Naive thymus-derived CD4-positive, alpha-beta T cell (primary cell): ENCODE measurements at regions of chr11 and their contacts with region 1.

Region 1: DNA sequence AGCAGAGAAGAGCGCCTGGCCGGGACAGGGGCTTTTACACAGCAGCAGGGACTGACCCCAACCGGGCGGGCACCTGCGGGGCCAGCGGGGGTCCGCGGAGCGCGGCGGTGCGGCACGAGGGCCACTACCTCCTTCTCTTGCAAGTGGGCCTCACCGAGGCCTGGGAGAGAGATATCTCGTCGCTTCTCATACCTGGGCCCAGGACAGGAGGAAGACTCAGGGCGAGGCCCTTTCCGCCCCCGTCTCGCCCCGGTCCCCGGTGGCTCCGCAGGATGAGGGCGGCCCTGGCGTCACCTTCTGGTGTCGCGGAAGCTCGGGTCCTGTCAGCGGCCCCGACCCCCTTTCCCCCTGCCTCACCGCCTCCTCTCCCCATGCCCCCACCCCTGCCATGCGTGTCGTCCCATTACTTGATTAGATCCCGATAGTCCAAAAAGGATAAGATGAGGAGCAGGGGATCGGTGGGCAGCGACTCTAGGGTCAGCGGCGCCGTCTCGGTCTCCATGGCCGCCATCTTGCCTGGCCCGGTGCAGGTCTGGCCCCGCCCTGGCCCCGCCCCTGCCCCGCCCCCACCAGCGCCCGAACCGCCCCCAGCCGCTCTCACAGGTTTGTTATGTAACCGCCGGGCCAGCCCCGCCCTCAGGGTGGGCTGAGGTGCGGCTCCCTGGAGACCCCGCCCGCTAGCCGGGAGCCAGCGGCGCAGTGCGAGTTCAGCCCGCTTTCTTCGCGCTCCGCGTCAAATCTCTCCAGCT is at the start of gene FBXO3:
- DNase-seq: peak; percentile 71 to 91 (median 88)
- ATAC-seq: peak; percentile 98
- H3K4me3 ChIP-seq: peak within 1 kb of the TSS; percentile 91
- H3K4me3 Mint-ChIP-seq: peak within 1 kb of the TSS; percentile 93 to 99 (median 97)
- H3K27ac ChIP-seq: peak within 1 kb of the TSS; percentile 83
- H3K27ac Mint-ChIP-seq: peak within 1 kb of the TSS; percentile 93 to 98 (median 96)
- H3K4me1 ChIP-seq: peaks cover 20 to 23% of the 10 kb centered on the region in 2 donors
- H3K4me1 Mint-ChIP-seq: peaks cover 33 to 58% (median 45%) of the 10 kb centered on the region in 7 donors
- H3K27me3 ChIP-seq: no peaks in the 10 kb centered on the region
- H3K27me3 Mint-ChIP-seq: peaks cover 0 to 34% (median 7%) of the 10 kb centered on the region in 5 donors
- total RNA-seq, gene FBXO3: 22.6 to 55.7 (median 47.7) TPM

Region 2: GRCh38 chr11:33039274-33040032 is 734.7 kb before region 1 on chr11 and contains the start of gene TCP11L1:
- CTCF ChIA-PET with region 1: no interaction called
- POLR2A ChIA-PET with region 1: no interaction called
- intact Hi-C with region 1: loop called in 1 of 2 experiments (anchors 1 kb)
- DNase-seq: peak; percentile 57 to 88 (median 76)
- ATAC-seq: peak; percentile 93
- H3K4me3 ChIP-seq: peak within 1 kb of the TSS; percentile 100
- H3K4me3 Mint-ChIP-seq: peak within 1 kb of the TSS; percentile 91 to 97 (median 94)
- H3K27ac ChIP-seq: peak within 1 kb of the TSS; percentile 82
- H3K27ac Mint-ChIP-seq: peak within 1 kb of the TSS; percentile 77 to 95 (median 92)
- H3K4me1 ChIP-seq: peaks cover 3 to 9% of the 10 kb centered on the region in 2 donors
- H3K4me1 Mint-ChIP-seq: peaks cover 0 to 17% (median 14%) of the 10 kb centered on the region in 7 donors
- H3K27me3 ChIP-seq: no peaks in the 10 kb centered on the region
- H3K27me3 Mint-ChIP-seq: peaks cover 0 to 17% (median 0%) of the 10 kb centered on the region in 5 donors
- total RNA-seq, gene TCP11L1: 9.1 to 17.1 (median 13.3) TPM

Region 3: DNA sequence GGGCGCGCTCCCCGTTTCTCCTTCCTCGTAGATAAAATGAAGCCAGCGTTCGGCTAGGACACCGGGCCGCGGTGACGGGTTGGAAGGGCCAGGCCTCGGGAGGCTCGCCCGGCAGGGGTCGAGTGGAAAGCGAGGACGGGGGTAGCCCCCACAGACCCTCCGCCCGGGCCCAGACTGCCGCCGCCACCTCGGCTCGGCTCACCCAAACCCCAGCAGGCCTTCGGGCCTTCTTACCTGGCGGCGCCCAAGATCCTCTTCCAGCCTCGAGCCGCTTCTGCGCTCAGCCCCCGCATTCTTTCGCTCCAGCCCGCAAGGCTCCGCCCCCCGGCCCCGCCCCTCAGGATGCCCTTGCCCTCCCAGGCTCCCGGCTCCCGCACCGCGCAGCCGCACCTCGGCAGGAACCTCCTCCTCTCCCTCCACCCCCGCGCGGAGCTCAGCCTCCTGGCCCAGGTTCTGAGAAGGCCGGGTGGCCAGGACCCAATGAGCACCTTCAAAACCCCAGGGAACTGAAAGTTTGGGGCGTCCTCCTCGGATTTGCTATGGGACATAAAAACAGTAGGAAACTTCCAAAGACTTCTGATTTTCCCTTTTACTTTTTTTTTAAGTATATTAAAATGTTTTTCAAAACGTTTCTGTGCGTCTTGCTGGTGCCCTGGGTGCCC is 37.9 kb before region 1 on chr11 and contains the start of gene CD59:
- CTCF ChIA-PET with region 1: no interaction called
- POLR2A ChIA-PET with region 1: interaction called, 22 read pairs
- intact Hi-C with region 1: loop called (anchors 1 kb)
- DNase-seq: peak; percentile 75 to 94 (median 85)
- ATAC-seq: peak; percentile 92
- H3K4me3 ChIP-seq: peak within 1 kb of the TSS; percentile 76
- H3K4me3 Mint-ChIP-seq: peak within 1 kb of the TSS; percentile 87 to 97 (median 92)
- H3K27ac ChIP-seq: peak within 1 kb of the TSS; percentile 72
- H3K27ac Mint-ChIP-seq: peak within 1 kb of the TSS; percentile 79 to 94 (median 86)
- H3K4me1 ChIP-seq: peaks cover 9 to 17% of the 10 kb centered on the region in 2 donors
- H3K4me1 Mint-ChIP-seq: peaks cover 21 to 41% (median 36%) of the 10 kb centered on the region in 7 donors
- H3K27me3 ChIP-seq: no peaks in the 10 kb centered on the region
- H3K27me3 Mint-ChIP-seq: peaks cover 0 to 11% (median 0%) of the 10 kb centered on the region in 5 donors
- total RNA-seq, gene CD59: 23.3 to 152 (median 62.7) TPM

Region 4: DNA sequence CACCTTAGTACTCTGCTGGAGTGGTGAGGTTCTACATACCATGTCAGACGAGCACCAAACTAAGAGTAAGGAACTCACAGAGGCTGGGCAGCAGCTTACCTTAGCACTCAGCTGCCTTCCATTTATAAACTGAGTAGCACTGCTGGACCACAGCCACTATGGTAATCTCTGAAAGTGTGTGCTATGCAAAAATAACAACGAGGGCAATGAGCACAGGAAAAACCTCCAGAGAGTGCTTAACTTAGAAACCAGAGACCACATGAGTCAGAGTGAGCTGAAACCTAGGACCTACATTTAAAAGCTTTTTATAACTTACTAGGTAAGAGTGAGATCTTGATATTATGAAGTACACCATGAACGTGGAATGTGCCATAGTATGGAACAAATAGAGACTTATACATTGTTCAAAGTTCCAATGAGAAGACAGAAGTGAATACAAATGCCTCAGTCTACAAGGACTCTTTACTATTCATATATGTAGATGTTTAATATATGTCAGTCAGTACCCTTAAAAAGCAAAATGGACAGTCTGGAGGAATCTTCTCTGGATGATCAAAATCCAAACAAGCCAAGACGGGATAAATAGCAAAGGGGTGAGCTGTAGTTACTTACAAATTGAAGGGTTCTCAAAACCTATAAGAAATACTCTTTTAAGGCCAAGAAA is 20.7 kb before region 1 on chr11:
- CTCF ChIA-PET with region 1: no interaction called
- POLR2A ChIA-PET with region 1: interaction called, 10 read pairs
- intact Hi-C with region 1: loop called in 1 of 2 experiments (anchors 2 kb)
- DNase-seq: no peak
- ATAC-seq: no peak
- H3K4me3 ChIP-seq: no peak overlapping the region
- H3K4me3 Mint-ChIP-seq: no peak overlapping the region
- H3K27ac ChIP-seq: no peak overlapping the region
- H3K27ac Mint-ChIP-seq: peak overlapping the region in 2 of 9 donors; percentile 54 to 78
- H3K4me1 ChIP-seq: no peaks in the 10 kb centered on the region
- H3K4me1 Mint-ChIP-seq: peaks cover 0 to 7% (median 0%) of the 10 kb centered on the region in 7 donors
- H3K27me3 ChIP-seq: no peaks in the 10 kb centered on the region
- H3K27me3 Mint-ChIP-seq: no peaks in the 10 kb centered on the region

Region 5: GRCh38 chr11:33874910-33875490 is 100.8 kb after region 1 on chr11:
- CTCF ChIA-PET with region 1: no interaction called
- POLR2A ChIA-PET with region 1: no interaction called
- intact Hi-C with region 1: no loop called
- DNase-seq: no peak
- ATAC-seq: peak; percentile 18
- H3K4me3 ChIP-seq: no peak overlapping the region
- H3K4me3 Mint-ChIP-seq: no peak overlapping the region
- H3K27ac ChIP-seq: no peak overlapping the region
- H3K27ac Mint-ChIP-seq: no peak overlapping the region
- H3K4me1 ChIP-seq: no peaks in the 10 kb centered on the region
- H3K4me1 Mint-ChIP-seq: peaks cover 0 to 10% (median 2%) of the 10 kb centered on the region in 7 donors
- H3K27me3 ChIP-seq: peaks cover 0 to 7% of the 10 kb centered on the region in 2 donors
- H3K27me3 Mint-ChIP-seq: peaks cover 59 to 75% (median 67%) of the 10 kb centered on the region in 5 donors

Region 6: GRCh38 chr11:34438529-34439507 is 664.7 kb after region 1 on chr11 and contains the start of gene CAT:
- CTCF ChIA-PET with region 1: no interaction called
- POLR2A ChIA-PET with region 1: no interaction called
- intact Hi-C with region 1: loop called (anchors 1 to 5 kb)
- DNase-seq: peak; percentile 94 to 98 (median 97)
- ATAC-seq: peak; percentile 98
- H3K4me3 ChIP-seq: peak within 1 kb of the TSS; percentile 90
- H3K4me3 Mint-ChIP-seq: peak within 1 kb of the TSS; percentile 88 to 98 (median 96)
- H3K27ac ChIP-seq: peak within 1 kb of the TSS; percentile 79
- H3K27ac Mint-ChIP-seq: peak within 1 kb of the TSS; percentile 89 to 97 (median 93)
- H3K4me1 ChIP-seq: peaks cover 7 to 19% of the 10 kb centered on the region in 2 donors
- H3K4me1 Mint-ChIP-seq: peaks cover 21 to 47% (median 35%) of the 10 kb centered on the region in 7 donors
- H3K27me3 ChIP-seq: no peaks in the 10 kb centered on the region
- H3K27me3 Mint-ChIP-seq: no peaks in the 10 kb centered on the region
- total RNA-seq, gene CAT: 23.3 to 55.9 (median 42.6) TPM

Region 7: GRCh38 chr11:35662649-35663407 is 1888.7 kb after region 1 on chr11 and contains the start of gene TRIM44:
- CTCF ChIA-PET with region 1: no interaction called
- POLR2A ChIA-PET with region 1: no interaction called
- intact Hi-C with region 1: loop called in 1 of 2 experiments (anchors 10 kb)
- DNase-seq: peak; percentile 69 to 85 (median 82)
- ATAC-seq: peak; percentile 89
- H3K4me3 ChIP-seq: peak within 1 kb of the TSS; percentile 94
- H3K4me3 Mint-ChIP-seq: peak within 1 kb of the TSS; percentile 91 to 99 (median 95)
- H3K27ac ChIP-seq: peak within 1 kb of the TSS; percentile 94
- H3K27ac Mint-ChIP-seq: peak within 1 kb of the TSS; percentile 90 to 100 (median 96)
- H3K4me1 ChIP-seq: peaks cover 21 to 22% of the 10 kb centered on the region in 2 donors
- H3K4me1 Mint-ChIP-seq: peaks cover 24 to 61% (median 55%) of the 10 kb centered on the region in 7 donors
- H3K27me3 ChIP-seq: no peaks in the 10 kb centered on the region
- H3K27me3 Mint-ChIP-seq: peaks cover 0 to 22% (median 5%) of the 10 kb centered on the region in 5 donors
- total RNA-seq, gene TRIM44: 35.7 to 60.8 (median 58.6) TPM